ENCODE measurements at regions of chr5 and their contacts with region 1.

Region 1: GRCh38 chr5:117999939-118000549 is 988.3 kb downstream of the DTWD2 start:
- DNase-seq: no peak
- ATAC-seq: peak; percentile 29
- H3K4me3 ChIP-seq: no peak overlapping the region
- H3K27ac ChIP-seq: no peak overlapping the region
- H3K4me1 ChIP-seq: no peaks in the 10 kb centered on the region
- H3K27me3 ChIP-seq: no peaks in the 10 kb centered on the region
- CTCF ChIP-seq: no peak
- POLR2A ChIP-seq: no peak
- RAD21 ChIP-seq: no peak

Region 2: GRCh38 chr5:117982691-117983090 is 17.4 kb before region 1 on chr5:
- CTCF ChIA-PET with region 1: interaction called, 6 read pairs
- POLR2A ChIA-PET with region 1: no interaction called
- dilution Hi-C with region 1: no loop called
- in situ Hi-C with region 1: no loop called
- intact Hi-C with region 1: loop called (anchors 2 kb)
- DNase-seq: no peak
- ATAC-seq: no peak; the same call in 1 of the 2 replicates
- H3K4me3 ChIP-seq: no peak overlapping the region
- H3K27ac ChIP-seq: no peak overlapping the region
- H3K4me1 ChIP-seq: no peaks in the 10 kb centered on the region
- H3K27me3 ChIP-seq: no peaks in the 10 kb centered on the region
- CTCF ChIP-seq: no peak
- POLR2A ChIP-seq: no peak
- RAD21 ChIP-seq: no peak

Region 3: GRCh38 chr5:118520771-118521415 is 520.8 kb after region 1 on chr5:
- CTCF ChIA-PET with region 1: no interaction called
- POLR2A ChIA-PET with region 1: no interaction called
- dilution Hi-C with region 1: no loop called
- in situ Hi-C with region 1: no loop called
- intact Hi-C with region 1: no loop called
- DNase-seq: no peak
- ATAC-seq: no peak
- H3K4me3 ChIP-seq: no peak overlapping the region
- H3K27ac ChIP-seq: no peak overlapping the region
- H3K4me1 ChIP-seq: no peaks in the 10 kb centered on the region
- H3K27me3 ChIP-seq: no peaks in the 10 kb centered on the region
- CTCF ChIP-seq: no peak
- POLR2A ChIP-seq: no peak
- RAD21 ChIP-seq: no peak